PC-9 (cell line): ENCODE measurements at regions of chrX and their contacts with region 1.

Region 1: GRCh38 chrX:118614150-118614549 is 113.3 kb upstream of the IL13RA1 start:
- DNase-seq: no peak
- H3K4me3 ChIP-seq: no peak overlapping the region
- H3K27ac ChIP-seq: no peak overlapping the region
- H3K4me1 ChIP-seq: no peaks in the 10 kb centered on the region
- H3K27me3 ChIP-seq: no peaks in the 10 kb centered on the region
- CTCF ChIP-seq: no peak

Region 2: GRCh38 chrX:118603981-118604380 is 10.2 kb before region 1 on chrX:
- CTCF ChIA-PET with region 1: interaction called, 22 read pairs
- POLR2A ChIA-PET with region 1: no interaction called
- intact Hi-C with region 1: no loop called
- DNase-seq: peak; percentile 33 to 35
- H3K4me3 ChIP-seq: no peak overlapping the region
- H3K27ac ChIP-seq: no peak overlapping the region
- H3K4me1 ChIP-seq: 0 out of 2 replicates have a peak, but pooled peaks cover 7% of the 10 kb centered on the region
- H3K27me3 ChIP-seq: no peaks in the 10 kb centered on the region
- CTCF ChIP-seq: peak; percentile 87

Region 3: DNA sequence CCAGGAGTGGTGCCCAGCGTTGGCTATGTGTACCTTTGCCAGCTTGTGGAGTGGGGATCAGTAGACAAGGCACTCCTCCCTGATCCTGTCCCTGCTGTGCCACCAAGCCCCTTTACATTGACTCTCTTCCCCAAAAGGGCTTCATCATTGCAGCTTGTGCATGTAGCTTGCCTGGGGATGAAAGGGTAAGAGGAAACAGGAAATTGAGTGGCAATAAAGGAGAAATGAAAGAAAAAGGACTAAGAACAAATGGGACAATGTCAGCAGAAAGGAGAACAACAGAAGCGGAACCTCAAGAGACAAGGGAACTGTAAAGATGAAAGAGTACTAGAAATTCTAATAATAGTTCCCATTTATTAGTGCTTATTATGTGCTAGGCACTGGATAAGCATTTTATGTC is 104.6 kb after region 1 on chrX:
- CTCF ChIA-PET with region 1: no interaction called
- POLR2A ChIA-PET with region 1: no interaction called
- intact Hi-C with region 1: no loop called
- DNase-seq: no peak
- H3K4me3 ChIP-seq: no peak overlapping the region
- H3K27ac ChIP-seq: no peak overlapping the region
- H3K4me1 ChIP-seq: peaks cover 9% of the 10 kb centered on the region
- H3K27me3 ChIP-seq: no peaks in the 10 kb centered on the region
- CTCF ChIP-seq: no peak